Tibial artery (tissue), 4 donors: ENCODE measurements at regions of chr13 and their contacts with region 1.

Region 1: DNA sequence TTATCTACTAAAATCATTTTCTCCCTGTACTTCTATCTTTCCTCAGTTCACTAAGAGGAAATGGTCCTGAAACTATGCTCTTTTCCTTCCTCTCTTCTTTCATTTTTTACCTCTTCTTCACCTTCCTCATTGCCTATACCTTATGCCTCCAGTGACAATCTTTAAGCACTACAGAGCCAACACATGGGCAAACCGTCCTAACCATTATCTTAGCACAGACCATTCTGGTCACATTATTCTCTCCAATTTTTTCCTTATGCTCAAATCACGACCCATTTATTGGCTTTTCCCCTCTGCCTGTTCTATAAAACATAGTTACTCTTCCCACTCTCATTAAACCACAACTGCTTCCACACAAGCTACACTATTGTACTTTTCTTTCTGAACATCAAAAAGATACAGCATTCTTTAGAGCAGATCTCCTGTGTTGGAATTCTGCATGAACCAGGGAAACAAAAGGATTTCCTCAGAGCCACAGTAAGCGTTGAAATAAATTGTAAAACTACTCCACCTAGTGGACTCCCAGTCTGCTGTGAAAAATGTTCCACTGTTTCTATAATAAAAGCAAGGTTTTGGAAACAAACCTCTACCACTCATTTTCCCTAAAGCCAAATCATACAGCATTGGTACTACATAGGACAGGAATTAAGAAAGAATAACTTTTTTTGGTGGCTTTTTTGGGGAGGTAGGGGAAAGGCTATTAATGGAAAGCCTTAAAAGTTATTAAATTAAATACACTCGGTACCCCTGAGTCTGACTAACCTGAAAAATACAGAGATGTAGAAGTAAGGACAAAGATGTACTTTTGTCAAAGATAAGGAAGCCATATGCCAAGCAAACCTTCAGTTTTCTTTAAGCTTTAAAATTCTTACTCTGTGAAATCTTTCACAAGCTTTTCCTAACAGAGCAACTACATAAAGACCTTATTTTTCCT is 19.5 kb downstream of the NUFIP1 start:
- DNase-seq: no peak
- H3K4me3 ChIP-seq: no peak overlapping the region
- H3K27ac ChIP-seq: peak overlapping the region; percentile 48 to 49
- H3K4me1 ChIP-seq: peaks cover 0 to 37% (median 6%) of the 10 kb centered on the region in 4 donors
- H3K27me3 ChIP-seq: no peaks in the 10 kb centered on the region
- CTCF ChIP-seq: peak; percentile 68 to 83

Region 2: GRCh38 chr13:43905435-43906031 is 1064.3 kb before region 1 on chr13:
- intact Hi-C with region 1: loop called (anchors 10 kb)
- DNase-seq: peak in 1 of 2 donors; percentile 26
- H3K4me3 ChIP-seq: no peak overlapping the region
- H3K27ac ChIP-seq: no peak overlapping the region
- H3K4me1 ChIP-seq: peaks cover 0 to 11% (median 5%) of the 10 kb centered on the region in 4 donors
- H3K27me3 ChIP-seq: no peaks in the 10 kb centered on the region
- CTCF ChIP-seq: peak; percentile 79 to 90

Region 3: GRCh38 chr13:44470638-44471562 is 498.9 kb before region 1 on chr13:
- intact Hi-C with region 1: loop called (anchors 5 kb)
- DNase-seq: no peak
- H3K4me3 ChIP-seq: no peak overlapping the region
- H3K27ac ChIP-seq: peak overlapping the region in 1 of 2 donors; percentile 5
- H3K4me1 ChIP-seq: peaks cover 0 to 59% (median 11%) of the 10 kb centered on the region in 4 donors
- H3K27me3 ChIP-seq: no peaks in the 10 kb centered on the region
- CTCF ChIP-seq: peak; percentile 51 to 53

Region 4: DNA sequence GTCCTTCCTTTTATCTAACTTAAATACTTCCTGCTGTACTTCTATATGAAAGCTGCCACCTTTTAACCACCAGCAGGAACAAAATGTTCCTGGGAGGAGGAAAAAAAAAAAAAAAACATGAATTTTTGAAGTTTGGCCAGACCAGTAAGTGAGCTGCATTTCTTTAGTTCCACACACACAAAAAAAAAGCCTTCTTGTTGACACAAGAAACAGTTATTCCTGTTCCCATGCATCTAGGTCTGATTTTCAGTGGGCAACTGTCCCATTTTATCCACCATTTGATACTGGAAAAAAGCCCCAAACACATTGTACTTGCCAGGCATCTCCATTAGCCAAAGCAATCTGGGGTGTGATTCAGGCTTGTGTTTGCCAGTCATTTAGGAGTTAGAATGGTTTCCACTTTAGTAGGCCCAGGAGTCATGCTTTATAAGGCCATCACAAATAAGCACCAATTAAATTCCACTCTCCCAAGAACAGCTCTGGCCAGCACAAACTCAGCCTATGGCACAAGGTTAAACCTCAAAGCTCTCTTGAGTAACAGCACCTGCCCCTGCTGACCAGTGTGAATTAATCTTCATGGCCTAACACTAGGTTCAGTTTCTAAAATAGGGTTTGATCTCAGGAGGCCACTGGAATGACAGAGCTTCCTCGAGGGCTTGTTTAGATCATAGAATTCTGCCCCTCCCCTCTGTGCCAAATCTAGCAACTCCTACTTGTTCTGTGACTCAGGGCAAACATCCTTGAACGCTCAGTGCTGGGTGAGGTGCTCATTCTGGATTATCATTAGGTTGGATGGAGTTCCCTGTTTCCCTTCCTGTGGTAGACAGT is 47.7 kb before region 1 on chr13:
- intact Hi-C with region 1: loop called (anchors 2 kb)
- DNase-seq: peak; percentile 81 to 91
- H3K4me3 ChIP-seq: no peak overlapping the region
- H3K27ac ChIP-seq: peak overlapping the region; percentile 89 to 92
- H3K4me1 ChIP-seq: peaks cover 0 to 51% (median 36%) of the 10 kb centered on the region in 4 donors
- H3K27me3 ChIP-seq: no peaks in the 10 kb centered on the region
- CTCF ChIP-seq: peak in 1 of 2 experiments; percentile 19

Region 5: DNA sequence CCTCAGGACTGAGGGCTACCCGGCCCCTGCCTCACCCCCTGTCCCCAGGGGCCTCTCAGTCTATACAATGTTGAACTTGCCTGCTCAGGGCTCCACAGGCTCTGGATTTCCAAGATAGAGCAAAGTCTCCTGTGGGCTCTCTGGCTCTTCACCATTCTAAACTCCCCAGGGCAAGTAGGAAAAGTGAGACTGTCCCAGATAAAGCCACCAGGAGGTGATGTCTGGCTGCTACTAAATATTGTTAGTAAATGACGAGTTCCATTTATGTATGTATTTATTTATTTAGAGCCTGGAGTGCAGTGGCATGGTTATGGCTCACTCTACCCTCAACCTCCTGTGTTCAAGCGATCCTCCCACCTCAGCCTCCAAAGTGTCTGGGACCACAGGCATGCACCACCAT is 955.3 kb after region 1 on chr13:
- intact Hi-C with region 1: no loop called
- DNase-seq: no peak
- H3K4me3 ChIP-seq: no peak overlapping the region
- H3K27ac ChIP-seq: no peak overlapping the region
- H3K4me1 ChIP-seq: no peaks in the 10 kb centered on the region
- H3K27me3 ChIP-seq: peaks cover 0 to 4% of the 10 kb centered on the region in 2 donors
- CTCF ChIP-seq: no peak